ENCODE measurements at regions of chr1 and their contacts with region 1.

Region 1: DNA sequence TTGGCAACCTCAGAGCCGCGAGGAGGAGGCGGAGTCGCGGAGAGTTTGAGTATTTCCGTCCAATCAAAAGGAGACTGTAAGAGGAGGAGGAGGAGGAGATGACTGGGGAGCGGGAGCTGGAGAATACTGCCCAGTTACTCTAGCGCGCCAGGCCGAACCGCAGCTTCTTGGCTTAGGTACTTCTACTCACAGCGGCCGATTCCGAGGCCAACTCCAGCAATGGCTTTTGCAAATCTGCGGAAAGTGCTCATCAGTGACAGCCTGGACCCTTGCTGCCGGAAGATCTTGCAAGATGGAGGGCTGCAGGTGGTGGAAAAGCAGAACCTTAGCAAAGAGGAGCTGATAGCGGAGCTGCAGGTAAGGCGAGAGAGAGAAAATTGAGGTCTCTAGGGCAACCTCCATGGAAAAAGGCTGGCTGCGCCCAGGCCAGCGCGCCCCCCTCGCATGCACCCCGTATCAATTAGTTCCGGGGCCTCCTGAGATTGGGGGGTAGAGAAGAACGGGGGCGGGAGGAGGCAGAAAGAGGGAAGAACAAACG is at the start of gene PHGDH:
- DNase-seq: peak; percentile 92
- H3K4me3 Mint-ChIP-seq: peak within 1 kb of the TSS; percentile 90
- H3K27ac Mint-ChIP-seq: peak within 1 kb of the TSS; percentile 86
- H3K4me1 Mint-ChIP-seq: peaks cover 23% of the 10 kb centered on the region
- H3K27me3 Mint-ChIP-seq: no peaks in the 10 kb centered on the region
- CTCF ChIP-seq: no peak
- total RNA-seq, gene PHGDH: 165 and 198 TPM in 2 replicates

Region 2: DNA sequence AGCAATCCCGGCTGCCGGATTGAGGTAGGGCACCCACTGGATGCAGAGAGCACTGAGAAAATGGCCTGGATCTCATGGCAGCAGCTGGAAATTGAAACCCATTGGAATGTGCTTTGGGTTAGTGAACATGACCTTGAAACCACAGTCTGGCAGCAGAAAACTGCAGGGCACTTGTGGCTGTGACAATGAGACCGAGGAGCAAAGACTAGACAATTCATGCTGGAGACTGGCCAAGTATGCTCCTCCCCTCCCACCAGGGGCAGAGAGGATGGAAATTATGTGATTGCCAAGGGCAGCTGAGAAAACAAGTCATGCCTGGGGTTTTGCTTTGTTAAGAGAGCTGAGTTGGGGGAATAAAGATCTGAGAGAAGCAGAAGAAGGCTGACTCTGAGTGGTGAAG is 124.5 kb before region 1 on chr1:
- CTCF ChIA-PET with region 1: no interaction called
- POLR2A ChIA-PET with region 1: no interaction called
- intact Hi-C with region 1: no loop called
- DNase-seq: no peak
- H3K4me3 Mint-ChIP-seq: no peak overlapping the region
- H3K27ac Mint-ChIP-seq: no peak overlapping the region
- H3K4me1 Mint-ChIP-seq: no peaks in the 10 kb centered on the region
- H3K27me3 Mint-ChIP-seq: no peaks in the 10 kb centered on the region
- CTCF ChIP-seq: no peak

Region 3: DNA sequence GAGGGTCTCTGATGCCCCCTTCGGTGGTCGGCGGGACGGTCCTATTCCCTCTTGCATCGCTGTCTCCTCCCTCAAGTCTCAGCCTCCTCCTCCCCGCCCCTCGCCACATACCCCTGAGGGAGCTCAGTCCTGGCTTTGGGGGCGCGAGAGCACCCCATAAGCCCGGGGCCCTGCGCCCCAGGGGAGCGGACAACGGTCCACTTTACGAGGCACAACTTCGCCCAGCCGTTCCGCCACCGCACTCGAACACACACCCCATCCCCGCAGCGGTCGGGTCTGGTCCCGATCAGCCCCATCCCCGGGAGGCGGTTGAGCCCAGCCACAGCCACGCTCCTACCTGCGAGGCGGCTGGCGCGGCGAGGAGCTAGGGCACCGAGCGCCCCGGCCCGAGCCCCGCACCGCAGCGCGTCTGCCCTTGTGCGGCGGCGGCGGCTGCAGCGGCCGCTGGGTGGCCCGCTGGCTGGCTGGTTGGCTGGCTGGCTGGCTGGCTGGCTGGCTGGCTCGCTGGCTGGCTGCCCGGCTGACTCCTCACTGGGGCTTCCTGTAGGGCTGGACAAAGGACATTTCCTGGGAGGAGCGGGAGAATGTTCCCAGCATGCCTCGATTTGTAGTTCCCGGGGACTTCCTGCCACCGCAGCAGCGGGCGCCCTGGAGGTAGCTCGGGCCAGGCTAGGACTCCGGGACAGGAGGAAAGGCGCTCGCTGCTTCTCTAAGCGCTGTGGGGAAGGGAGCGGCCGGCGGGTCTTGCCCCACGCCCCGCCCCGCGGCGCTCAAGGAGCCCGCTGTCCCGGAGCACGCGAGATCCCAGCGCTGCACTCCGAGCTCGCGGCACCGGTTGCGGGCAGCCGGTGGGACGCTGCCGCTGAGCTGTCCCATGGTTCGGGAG is 63.9 kb before region 1 on chr1 and contains the start of gene ZNF697:
- CTCF ChIA-PET with region 1: no interaction called
- POLR2A ChIA-PET with region 1: interaction called, 10 read pairs
- intact Hi-C with region 1: no loop called
- DNase-seq: peak; percentile 97
- H3K4me3 Mint-ChIP-seq: peak within 1 kb of the TSS; percentile 84
- H3K27ac Mint-ChIP-seq: peak within 1 kb of the TSS; percentile 90
- H3K4me1 Mint-ChIP-seq: peaks cover 51% of the 10 kb centered on the region
- H3K27me3 Mint-ChIP-seq: peaks cover 14% of the 10 kb centered on the region
- CTCF ChIP-seq: no peak
- total RNA-seq, gene ZNF697: 12.2 and 13.2 TPM in 2 replicates

Region 4: DNA sequence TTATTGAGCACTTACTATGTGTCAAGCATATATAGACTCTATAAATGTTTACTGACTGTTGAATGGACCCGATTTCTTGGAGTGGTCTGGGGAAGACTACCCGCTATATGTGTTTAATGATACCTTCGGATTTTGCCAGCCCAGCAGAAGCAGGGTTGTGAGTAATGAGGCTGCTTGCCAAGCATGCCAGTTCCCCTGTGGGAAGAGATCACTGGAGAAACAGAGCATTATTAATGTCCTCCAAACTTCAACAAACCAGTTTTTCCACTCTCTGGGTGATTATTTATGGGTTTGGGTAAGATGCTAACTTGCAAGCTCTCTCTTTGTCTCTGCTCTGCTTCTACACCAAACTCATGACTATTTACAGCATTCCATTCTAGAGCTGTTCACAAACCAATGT is 25.2 kb before region 1 on chr1:
- CTCF ChIA-PET with region 1: interaction called, 6 read pairs
- POLR2A ChIA-PET with region 1: interaction called, 20 read pairs
- intact Hi-C with region 1: no loop called
- DNase-seq: peak; percentile 59
- H3K4me3 Mint-ChIP-seq: no peak overlapping the region
- H3K27ac Mint-ChIP-seq: no peak overlapping the region
- H3K4me1 Mint-ChIP-seq: peaks cover 19% of the 10 kb centered on the region
- H3K27me3 Mint-ChIP-seq: no peaks in the 10 kb centered on the region
- CTCF ChIP-seq: no peak

Measured in MCF 10A (cell line).